ENCODE measurements at regions of chr20 and their contacts with region 1.

Region 1: GRCh38 chr20:51318058-51318895 is 224.2 kb downstream of the NFATC2 start:
- DNase-seq: peak; percentile 51
- ATAC-seq: peak; percentile 96
- H3K4me3 ChIP-seq: no peak overlapping the region
- H3K27ac ChIP-seq: no peak overlapping the region
- H3K4me1 ChIP-seq: peaks cover 0 to 7% of the 10 kb centered on the region in 2 experiments; a peak in 3 of 4 replicates
- H3K27me3 ChIP-seq: no peaks in the 10 kb centered on the region
- CTCF ChIP-seq: peak; percentile 72 to 94 (median 94); a peak in 5 of 6 replicates
- POLR2A ChIP-seq: no peak
- RAD21 ChIP-seq: peak; percentile 59

Region 2: GRCh38 chr20:51014797-51015722 is 303.2 kb before region 1 on chr20:
- CTCF ChIA-PET with region 1: interaction called, 11 read pairs
- POLR2A ChIA-PET with region 1: no interaction called
- RAD21 ChIA-PET with region 1: no interaction called
- intact Hi-C with region 1: no loop called
- DNase-seq: no peak
- ATAC-seq: peak; percentile 93
- H3K4me3 ChIP-seq: no peak overlapping the region
- H3K27ac ChIP-seq: no peak overlapping the region
- H3K4me1 ChIP-seq: no peaks in the 10 kb centered on the region
- H3K27me3 ChIP-seq: no peaks in the 10 kb centered on the region
- CTCF ChIP-seq: peak; percentile 43 to 92 (median 83); a peak in 5 of 6 replicates
- POLR2A ChIP-seq: no peak
- RAD21 ChIP-seq: peak; percentile 71

Region 3: DNA sequence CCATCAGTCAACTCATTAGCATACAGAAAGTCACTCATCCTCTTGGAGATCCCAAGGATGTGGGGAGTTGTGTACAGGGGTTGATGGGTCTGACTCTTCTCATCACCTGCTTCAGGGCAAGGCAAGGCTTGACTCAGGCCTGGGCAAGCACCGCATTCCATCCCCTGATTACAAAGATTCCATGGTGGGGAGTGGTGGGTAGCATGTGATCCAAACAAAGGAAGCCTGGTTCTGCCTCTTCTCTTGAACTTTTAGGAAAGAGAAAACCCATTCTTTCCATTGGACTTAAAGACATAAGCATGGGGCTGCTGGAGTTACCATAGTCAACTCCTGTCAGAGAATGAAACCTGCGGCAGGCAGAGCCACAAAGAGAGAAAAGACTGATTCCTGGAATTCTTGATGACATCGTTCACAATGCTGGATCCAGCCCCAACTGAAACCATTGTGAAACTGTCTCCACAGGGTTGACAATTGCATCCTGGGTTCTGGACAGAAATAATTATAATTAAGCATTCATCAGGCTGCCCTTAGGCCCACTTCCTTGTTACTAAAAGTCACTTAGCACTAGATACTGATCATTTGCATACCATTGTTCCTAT is 59.6 kb before region 1 on chr20:
- CTCF ChIA-PET with region 1: no interaction called
- POLR2A ChIA-PET with region 1: no interaction called
- RAD21 ChIA-PET with region 1: no interaction called
- intact Hi-C with region 1: no loop called
- DNase-seq: no peak
- ATAC-seq: peak; percentile 63; the same call in 1 of the 2 replicates
- H3K4me3 ChIP-seq: no peak overlapping the region
- H3K27ac ChIP-seq: no peak overlapping the region
- H3K4me1 ChIP-seq: peaks cover 0 to 13% of the 10 kb centered on the region in 2 experiments; a peak in 3 of 4 replicates
- H3K27me3 ChIP-seq: no peaks in the 10 kb centered on the region
- CTCF ChIP-seq: no peak
- POLR2A ChIP-seq: no peak
- RAD21 ChIP-seq: no peak

Region 4: GRCh38 chr20:51333971-51334370 is 15.7 kb after region 1 on chr20:
- CTCF ChIA-PET with region 1: interaction called, 11 read pairs
- POLR2A ChIA-PET with region 1: no interaction called
- RAD21 ChIA-PET with region 1: no interaction called
- intact Hi-C with region 1: no loop called
- DNase-seq: no peak
- ATAC-seq: no peak
- H3K4me3 ChIP-seq: no peak overlapping the region
- H3K27ac ChIP-seq: no peak overlapping the region
- H3K4me1 ChIP-seq: peaks cover 0 to 7% of the 10 kb centered on the region in 2 experiments; a peak in 2 of 4 replicates
- H3K27me3 ChIP-seq: no peaks in the 10 kb centered on the region
- CTCF ChIP-seq: no peak
- POLR2A ChIP-seq: no peak
- RAD21 ChIP-seq: no peak

Measured in HCT116 (cell line).